Posterior cingulate gyrus (tissue), 11 donors: ENCODE measurements at regions of chr5 and their contacts with region 1.

Region 1: GRCh38 chr5:136364307-136364706 is 1.0 kb downstream of the TRPC7 start:
- DNase-seq: peak in 2 of 10 donors; percentile 13 to 15

Region 2: DNA sequence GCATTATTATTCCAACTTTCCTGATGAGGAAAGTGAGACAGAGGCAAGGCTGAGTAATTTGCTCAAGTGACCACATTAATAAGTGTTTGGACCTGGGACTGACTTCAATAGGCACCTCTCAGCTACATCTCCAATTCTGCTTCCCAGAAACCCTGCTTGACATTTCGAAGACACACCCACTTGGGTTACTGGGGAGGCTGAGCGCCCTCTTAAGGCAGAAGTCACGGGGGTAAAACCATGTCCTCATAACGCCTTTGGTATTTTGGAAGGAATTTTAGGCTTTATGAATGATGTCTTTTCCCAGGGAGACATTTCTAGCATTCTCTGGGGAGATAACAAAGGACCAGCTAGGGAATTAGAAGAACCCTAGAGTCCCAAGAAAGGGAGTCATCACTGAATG is 52.3 kb before region 1 on chr5:
- intact Hi-C with region 1: no loop called
- DNase-seq: no peak

Region 3: DNA sequence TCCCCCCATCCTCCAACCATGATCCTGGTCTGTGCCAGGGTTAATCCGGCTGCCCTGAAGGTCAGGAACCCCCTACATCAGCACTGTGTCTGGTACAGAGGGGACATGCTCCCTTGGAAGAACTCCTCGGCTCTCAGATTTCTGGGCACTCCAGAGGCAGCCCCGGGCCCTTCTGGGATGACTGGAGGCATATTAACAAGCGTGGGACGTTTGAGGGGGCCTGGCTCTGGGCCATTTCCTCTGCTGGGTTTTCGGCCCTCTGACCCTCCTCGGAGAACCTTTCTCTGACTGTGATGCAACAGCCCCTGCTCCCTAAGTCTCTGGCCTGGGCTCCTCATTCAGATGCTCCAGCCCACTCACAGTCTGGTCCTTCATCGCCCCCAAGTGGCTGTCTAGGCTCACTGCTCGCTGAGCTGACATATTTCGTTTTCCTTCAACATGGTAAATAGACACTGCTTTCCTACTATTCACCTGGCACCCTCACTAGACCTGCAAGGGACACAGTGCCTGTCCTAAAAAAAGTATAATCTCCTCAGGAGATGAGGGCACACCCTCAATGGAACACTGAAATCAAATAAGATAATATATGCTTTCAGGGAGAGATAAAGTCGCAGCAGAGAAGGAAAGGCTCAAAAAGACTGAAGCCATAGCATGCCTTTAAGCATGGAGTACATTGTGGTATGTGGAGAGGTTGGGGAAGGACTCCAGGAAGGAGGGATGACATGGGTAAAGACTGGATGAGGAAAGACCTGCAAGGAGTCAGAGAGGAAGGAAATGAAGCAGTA is 405.8 kb after region 1 on chr5:
- intact Hi-C with region 1: loop called (anchors 2 kb)
- DNase-seq: peak; percentile 34 to 96 (median 78)